RWPE1 (cell line): ENCODE measurements at regions of chr2 and their contacts with region 1.

Region 1: DNA sequence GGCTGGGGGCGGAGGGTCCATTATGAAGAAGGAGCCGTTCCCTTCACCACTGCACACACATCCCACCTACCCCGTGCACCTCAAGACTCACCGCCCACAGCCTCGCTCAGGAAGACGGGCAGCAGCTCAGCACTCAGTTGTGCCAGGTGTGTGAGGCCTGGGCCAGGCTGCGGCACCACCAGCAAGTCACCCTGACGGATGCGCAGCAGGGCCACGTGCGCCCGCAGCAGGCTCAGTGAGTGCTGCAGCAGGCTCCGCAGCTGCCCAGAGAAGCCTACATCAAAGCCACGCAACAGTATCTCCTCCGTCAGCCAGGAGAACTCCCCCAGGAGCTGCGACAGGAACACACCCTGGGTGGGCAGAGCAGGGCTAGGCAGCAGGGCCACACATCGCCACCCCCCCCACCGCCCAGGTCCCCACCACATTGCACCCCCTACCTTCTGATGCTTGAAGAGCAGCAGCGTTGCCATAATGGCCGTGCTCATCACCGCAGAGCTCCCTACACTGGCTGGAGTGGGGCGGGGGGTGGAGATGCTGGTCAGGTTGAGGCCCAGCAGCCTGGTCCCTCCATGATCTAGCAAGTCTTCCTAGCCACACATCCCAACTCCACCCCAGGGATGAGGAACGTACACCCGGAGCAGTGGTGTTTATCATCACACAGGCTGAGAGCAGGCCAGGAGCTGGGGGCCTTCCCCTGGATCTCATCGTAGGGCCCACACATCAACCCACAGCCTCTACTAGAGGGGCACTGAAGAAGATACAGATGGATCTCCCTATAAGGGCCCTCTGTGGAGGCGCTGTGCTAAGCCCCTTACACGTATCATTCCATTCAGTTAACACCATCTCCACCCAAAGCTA is 10.2 kb downstream of the GPAT2 start:
- DNase-seq: no peak
- H3K27ac ChIP-seq: no peak overlapping the region
- CTCF ChIP-seq: no peak

Region 2: GRCh38 chr2:96116879-96117697 is 92.5 kb after region 1 on chr2:
- CTCF ChIA-PET with region 1: interaction called, 27 read pairs
- POLR2A ChIA-PET with region 1: no interaction called
- DNase-seq: peak; percentile 80
- H3K27ac ChIP-seq: peak overlapping the region; percentile 25; the same call in 1 of the 2 replicates
- CTCF ChIP-seq: peak; percentile 95

Region 3: DNA sequence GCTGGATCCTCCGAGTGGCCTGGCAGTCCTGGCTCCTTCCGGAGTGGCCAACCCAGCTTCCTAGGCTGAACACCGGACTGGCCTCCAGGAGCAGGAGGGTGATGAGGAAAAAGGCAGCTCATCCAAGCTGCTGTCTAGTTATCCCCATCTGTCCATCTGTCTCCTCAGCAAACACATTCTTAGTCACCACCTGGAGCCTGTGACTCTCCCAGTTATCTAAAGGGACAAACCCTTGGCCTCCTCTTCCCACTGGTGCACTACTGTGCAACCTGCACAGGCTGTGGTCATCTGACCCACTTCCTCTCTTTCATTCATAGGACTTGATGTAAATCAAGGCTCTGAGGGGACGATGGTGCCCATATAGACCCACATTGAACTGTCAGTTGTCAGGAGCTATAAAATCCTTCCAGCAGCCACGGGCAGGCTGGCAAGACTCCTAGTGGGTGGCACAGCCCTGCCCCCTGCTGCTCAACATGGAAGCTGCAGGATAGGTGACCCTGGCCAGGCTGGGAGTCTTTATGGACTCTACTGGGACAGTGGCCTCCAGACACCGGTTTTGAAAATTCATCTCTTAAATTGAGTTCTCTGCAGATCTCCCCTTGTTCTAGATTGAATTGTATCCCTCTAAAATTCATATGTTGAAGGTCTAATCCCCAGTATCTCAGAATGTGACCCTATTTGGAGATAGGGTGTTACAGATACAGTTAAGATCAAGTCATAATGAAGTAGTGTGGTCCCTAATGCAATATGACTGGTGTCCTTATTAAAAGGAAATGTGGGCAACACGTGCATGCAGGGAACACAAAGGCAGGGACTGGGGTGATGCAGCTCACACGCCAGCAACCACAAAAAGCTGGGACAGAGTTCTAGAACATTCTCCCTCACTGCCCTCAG is 149.9 kb after region 1 on chr2:
- CTCF ChIA-PET with region 1: interaction called, 20 read pairs
- POLR2A ChIA-PET with region 1: no interaction called
- DNase-seq: peak; percentile 77
- H3K27ac ChIP-seq: no peak overlapping the region
- CTCF ChIP-seq: peak; percentile 79

Region 4: DNA sequence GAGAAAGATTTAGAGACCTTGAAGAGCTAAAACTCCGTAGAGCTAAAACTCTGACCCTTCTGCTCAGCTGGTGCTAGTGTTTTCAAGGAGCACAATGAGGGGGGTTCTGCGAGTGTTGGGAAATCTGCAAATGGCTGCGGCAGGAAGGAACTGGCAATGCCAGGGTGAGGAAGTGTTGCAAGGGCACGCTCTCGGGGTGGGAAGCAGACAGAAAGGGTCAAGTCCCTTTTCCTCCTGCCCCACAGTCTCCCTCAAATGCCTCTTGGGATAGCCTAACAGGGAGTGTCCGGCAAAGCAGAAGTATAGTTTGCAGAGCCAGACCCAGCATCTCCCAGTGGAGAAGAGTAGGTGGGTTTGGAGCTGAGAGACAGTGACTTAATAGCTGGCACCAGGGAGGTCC is 371.5 kb after region 1 on chr2:
- CTCF ChIA-PET with region 1: no interaction called
- POLR2A ChIA-PET with region 1: no interaction called
- DNase-seq: no peak
- H3K27ac ChIP-seq: no peak overlapping the region
- CTCF ChIP-seq: no peak